Right ventricle myocardium inferior (tissue), 1 donor: ENCODE measurements at regions of chr19 and their contacts with region 1.

Region 1: DNA sequence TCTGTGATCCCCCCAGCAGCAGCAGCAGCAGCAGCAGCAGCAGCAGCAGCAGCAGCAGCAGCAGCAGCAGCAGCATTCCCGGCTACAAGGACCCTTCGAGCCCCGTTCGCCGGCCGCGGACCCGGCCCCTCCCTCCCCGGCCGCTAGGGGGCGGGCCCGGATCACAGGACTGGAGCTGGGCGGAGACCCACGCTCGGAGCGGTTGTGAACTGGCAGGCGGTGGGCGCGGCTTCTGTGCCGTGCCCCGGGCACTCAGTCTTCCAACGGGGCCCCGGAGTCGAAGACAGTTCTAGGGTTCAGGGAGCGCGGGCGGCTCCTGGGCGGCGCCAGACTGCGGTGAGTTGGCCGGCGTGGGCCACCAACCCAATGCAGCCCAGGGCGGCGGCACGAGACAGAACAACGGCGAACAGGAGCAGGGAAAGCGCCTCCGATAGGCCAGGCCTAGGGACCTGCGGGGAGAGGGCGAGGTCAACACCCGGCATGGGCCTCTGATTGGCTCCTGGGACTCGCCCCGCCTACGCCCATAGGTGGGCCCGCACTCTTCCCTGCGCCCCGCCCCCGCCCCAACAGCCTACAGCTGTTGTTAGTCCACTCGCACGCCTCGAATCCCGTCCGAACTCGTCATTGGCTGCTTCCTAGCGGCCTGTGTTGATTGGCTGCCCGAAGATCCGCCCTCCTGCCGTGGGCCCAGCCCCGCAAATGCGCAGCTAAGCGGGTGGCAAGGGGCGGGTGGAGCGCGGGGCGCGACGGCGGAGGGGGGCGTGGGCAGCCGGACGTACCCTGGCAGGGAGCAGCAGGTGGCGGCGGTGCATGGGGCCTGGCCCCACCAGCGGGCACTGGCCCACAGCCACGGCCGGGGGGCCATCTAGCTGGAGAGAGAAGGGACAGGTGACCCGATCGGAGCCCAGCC is 1.4 kb upstream of the SIX5 start:
- DNase-seq: peak; percentile 97
- ATAC-seq: peak; percentile 81

Region 2: GRCh38 chr19:45607071-45608029 is 163.1 kb before region 1 on chr19:
- intact Hi-C with region 1: no loop called
- DNase-seq: peak; percentile 82
- ATAC-seq: peak; percentile 78

Region 3: DNA sequence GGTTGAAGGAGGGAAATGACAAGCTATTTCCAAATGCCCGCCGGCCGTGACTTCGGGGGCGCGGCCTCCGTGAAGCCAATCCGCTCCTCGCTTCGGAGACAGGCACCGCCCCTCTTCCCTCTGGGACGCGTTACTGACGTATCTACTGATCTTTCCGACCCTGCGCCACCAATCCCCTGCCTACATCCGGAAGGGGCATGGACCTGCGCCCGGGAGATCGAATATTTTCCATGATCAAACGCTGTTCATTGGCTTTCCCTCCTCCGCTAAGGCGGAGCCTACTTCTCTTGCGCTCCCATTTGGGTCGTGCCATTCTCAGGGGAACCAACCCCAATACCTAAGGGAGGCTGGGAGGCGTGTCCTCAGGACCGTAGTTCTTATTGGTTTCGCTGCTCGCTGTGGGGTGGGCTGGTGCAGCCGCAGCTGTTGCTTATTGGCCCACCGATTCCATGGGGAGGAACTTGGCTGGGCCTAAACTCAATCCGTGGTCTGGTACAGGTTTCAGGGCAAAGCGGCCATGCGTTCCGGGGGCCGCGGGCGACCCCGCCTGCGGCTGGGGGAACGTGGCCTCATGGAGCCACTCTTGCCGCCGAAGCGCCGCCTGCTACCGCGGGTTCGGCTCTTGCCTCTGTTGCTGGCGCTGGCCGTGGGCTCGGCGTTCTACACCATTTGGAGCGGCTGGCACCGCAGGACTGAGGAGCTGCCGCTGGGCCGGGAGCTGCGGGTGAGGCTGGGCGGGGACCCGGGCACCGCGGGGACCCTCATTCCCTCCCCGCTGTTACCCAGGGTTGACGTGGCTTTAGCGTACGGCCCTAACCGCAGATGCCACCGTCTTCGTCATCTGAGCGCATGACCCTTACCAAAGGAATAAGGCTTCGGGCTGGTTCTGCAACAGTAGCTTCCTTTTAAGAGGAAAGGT is 78.0 kb before region 1 on chr19 and contains the start of gene QPCTL:
- intact Hi-C with region 1: loop called (anchors 2 kb)
- DNase-seq: peak; percentile 97
- ATAC-seq: peak; percentile 95
- total RNA-seq, gene QPCTL: 1.5 TPM

Region 4: GRCh38 chr19:45717166-45717982 is 53.1 kb before region 1 on chr19:
- intact Hi-C with region 1: loop called (anchors 1 kb)
- DNase-seq: peak; percentile 100
- ATAC-seq: peak; percentile 99

Region 5: DNA sequence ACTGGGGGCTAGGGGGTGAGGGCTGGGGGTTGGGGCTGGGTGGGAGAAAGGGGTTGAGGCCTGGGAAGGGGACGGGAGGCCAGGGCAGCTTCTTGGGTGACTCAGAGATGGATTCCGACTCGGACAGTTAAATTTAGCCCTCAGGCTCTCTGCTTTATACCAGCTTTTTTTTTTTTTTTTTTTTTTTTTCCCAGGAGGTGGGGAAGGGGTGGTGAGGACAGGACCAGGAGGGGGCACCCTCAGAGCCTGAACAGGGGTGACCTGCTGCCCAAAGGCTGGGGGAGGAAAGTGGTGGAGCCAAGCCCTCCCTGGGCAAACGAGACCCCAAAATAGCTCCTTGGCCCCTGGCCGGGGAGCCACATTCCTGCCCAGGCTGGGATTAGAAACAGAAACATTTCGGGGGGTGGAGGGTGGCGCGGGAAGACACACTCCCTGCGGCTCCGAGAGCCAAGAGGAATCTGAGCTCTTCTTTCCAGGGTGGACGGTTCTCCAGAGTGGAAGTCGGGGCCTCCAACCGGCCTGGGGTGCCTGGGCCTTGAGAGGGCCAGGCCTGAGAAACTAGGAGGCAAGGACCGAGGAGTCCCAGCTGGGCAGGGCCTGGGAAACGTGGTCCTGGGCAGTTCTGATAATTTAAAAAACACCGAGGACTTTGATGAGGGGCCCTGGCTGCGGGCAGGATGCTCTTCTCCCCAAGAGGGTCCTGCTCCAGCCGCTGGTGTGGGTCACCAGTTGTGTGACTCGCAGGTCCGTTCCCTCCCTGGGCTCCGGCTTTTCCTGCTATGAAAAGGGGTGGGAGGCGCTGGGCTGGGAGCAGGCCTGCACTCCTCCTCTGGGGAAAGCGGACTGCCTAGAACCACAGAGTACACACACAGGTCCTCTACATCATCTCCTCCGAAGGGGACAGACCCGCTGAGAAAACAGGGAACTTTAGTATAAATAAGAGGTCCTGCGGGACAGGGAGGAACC is 12.7 kb after region 1 on chr19:
- intact Hi-C with region 1: loop called (anchors 1 kb)
- DNase-seq: peak; percentile 87
- ATAC-seq: peak; percentile 70

Region 6: DNA sequence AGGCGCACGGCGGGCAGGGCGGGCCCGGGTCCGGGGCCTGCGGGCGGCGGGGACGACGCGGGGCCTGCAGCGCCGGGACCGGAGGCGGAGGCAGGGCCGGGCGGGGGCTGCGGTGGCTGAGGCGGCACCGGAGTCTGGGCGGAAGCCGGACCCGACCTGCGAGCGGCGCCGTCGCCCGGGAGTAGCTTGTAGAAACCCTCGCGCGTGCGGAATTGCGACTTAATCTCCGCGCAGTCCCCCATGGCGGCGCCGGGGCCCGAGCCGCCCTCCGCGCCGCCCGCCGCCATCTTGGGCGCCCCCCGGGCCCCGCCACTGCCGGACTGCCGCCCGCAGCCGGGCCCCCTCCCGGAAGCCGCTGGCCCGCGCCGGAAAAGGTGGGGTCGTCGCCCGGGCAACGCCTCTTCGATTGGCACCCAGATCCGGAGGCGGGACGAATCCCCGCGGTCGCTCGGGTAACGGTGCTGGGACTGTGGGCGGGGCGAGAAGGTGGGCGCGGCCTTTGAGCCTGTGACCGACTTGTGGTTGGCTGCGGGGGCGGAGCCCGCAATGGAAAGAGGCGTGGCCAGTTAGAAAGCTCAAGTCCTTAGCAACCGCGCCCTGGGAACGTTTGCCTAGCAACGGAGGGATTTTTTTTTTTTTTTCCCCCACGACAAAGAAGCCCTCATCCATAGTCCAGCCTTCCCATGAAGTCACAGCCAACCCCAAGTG is 22.2 kb after region 1 on chr19 and contains the start of gene DMWD:
- intact Hi-C with region 1: loop called (anchors 1 kb)
- DNase-seq: peak; percentile 100
- ATAC-seq: peak; percentile 98
- total RNA-seq, gene DMWD: 52.0 TPM

Region 7: GRCh38 chr19:45798995-45799517 is 28.6 kb after region 1 on chr19:
- intact Hi-C with region 1: loop called (anchors 1 kb)
- DNase-seq: peak; percentile 78
- ATAC-seq: peak; percentile 83

Region 8: DNA sequence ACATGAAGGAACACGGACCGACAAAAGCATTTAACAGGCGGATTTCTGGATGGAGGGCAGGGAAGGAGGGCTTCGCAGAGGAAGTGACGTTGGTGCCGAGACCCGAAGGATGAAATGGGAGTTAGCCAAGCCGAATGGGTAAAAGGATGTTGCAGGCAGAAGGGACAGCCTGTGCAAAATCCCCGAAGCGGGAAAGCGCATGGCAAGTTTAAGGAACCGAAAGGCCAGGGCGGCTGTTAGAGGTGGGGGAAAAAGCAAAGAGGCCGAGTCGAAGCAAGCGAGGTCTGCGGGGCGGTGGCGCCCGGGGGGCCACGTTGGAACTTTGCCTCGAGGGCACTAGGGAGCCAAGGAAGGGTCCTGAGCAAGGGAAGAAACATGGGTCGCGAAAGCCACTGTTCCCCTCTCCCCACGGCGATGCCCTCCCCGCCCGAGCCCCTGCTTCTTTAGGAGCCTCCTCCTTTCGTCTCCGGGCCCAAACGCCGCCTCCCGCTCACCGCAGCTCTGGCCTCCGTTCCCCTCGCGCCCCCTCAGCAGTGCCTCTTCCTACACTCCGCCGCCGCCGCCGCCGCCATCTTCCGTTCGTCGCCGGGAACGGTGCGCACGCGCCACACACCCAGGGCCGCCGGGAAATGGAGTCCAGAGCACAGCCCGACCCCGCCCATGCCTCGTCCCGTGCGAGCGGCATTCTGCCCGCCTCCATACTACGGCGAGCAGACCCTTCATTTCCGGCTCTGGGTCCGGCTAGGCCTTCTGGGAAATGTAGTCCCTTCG is 92.3 kb after region 1 on chr19 and contains the start of gene SYMPK:
- intact Hi-C with region 1: loop called (anchors 5 kb)
- DNase-seq: peak; percentile 99
- ATAC-seq: peak; percentile 100
- total RNA-seq, gene SYMPK: 29.9 TPM